BJ (cell line): ENCODE measurements at regions of chr2 and their contacts with region 1.

Region 1: GRCh38 chr2:176140513-176141317 is 10.6 kb upstream of the HOXD4 start:
- DNase-seq: no peak
- H3K4me3 ChIP-seq: peak overlapping the region; percentile 53
- H3K27me3 ChIP-seq: peaks cover 40% of the 10 kb centered on the region
- CTCF ChIP-seq: peak; percentile 92

Region 2: DNA sequence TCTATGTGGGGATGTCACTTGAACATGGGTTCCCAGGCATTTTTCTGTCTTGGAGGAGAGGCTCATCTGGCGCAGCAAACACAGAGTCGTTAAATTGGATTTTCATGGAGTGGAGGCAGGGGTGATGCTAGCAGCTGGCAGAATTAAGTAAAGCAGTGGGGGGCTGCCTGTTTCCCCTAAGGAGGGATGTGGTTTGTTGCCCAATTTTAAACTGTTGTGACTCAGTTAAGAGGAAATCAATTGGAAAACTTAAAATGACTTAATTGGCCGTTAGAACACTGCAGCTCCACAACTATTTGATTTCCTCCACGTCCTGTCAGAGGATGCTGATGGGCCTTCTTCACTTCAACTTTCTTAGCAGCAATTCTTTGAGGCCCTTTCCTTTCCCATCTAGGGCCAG is 605.1 kb before region 1 on chr2:
- CTCF ChIA-PET with region 1: no interaction called
- POLR2A ChIA-PET with region 1: no interaction called
- DNase-seq: no peak
- H3K4me3 ChIP-seq: no peak overlapping the region
- H3K27me3 ChIP-seq: no peaks in the 10 kb centered on the region
- CTCF ChIP-seq: no peak

Region 3: DNA sequence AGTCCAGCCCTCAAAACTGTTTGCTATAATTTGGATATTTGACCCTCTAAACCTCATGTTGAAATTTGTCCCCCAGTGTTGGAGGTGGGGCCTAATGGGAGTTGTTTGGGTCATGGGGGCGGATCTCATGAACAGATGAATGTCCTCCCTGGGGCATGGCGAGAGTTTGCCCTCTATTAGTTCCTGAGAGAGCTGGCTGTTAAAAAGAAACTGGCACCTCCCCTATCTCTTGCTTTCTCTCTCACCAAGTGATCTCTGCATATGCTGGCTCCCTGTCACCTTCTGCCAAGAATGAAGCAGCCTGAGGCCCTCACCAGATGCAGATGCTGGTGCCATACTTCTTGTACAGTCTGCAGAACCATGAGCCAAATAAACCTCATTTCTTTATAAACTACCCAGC is 150.6 kb before region 1 on chr2:
- CTCF ChIA-PET with region 1: no interaction called
- POLR2A ChIA-PET with region 1: no interaction called
- DNase-seq: no peak
- H3K4me3 ChIP-seq: no peak overlapping the region
- H3K27me3 ChIP-seq: no peaks in the 10 kb centered on the region
- CTCF ChIP-seq: no peak

Region 4: DNA sequence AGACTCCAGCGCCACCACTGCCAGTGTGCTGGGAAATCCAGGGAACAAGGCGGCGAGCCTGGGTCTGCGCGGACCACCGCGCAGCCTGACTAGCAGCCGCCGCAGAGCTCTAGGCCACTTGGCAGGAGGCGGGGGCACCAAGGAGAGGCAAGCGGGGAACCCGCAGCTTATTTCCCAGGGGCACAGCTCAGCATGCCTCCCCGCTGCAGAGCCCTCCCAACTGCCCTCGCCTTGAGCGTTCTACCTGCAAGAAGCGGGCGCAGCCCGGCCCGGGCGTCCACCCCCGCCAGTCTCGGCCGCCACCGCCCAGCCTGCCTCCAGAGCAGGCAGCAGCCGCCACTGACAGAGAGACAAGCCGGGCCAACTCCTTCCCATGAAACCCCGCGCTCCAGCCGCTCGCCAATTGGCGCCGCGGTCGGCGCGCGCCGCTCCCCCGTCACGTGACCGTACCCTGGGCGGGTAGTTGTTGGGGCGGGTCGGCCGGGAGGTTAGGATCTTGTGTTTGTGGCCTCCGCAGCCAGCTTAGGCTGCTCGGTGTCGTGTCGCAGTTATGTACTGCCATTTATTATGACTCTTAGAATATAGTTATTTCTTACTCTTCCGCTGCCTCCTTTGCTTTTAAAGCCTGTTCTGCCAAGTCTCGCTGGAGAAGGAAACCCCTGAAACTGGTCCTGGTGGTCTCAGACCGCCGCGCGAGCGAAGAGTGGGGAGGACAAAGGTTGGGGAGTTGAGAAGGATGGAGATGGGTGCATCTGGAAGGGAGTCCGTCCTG is 138.6 kb before region 1 on chr2 and contains the start of gene LNPK:
- CTCF ChIA-PET with region 1: no interaction called
- POLR2A ChIA-PET with region 1: no interaction called
- DNase-seq: peak; percentile 41
- H3K4me3 ChIP-seq: peak within 1 kb of the TSS; percentile 49
- H3K27me3 ChIP-seq: no peaks in the 10 kb centered on the region
- CTCF ChIP-seq: 0 out of 2 replicates have a peak, but pooled peaks have one; percentile 7
- polyA plus RNA-seq, gene LNPK: 19.6 and 36.5 TPM in 2 replicates

Region 5: GRCh38 chr2:176115883-176116813 is 24.6 kb before region 1 on chr2 and contains the start of gene HOXD10:
- CTCF ChIA-PET with region 1: no interaction called
- POLR2A ChIA-PET with region 1: no interaction called
- DNase-seq: no peak
- H3K4me3 ChIP-seq: no peak within 1 kb of the TSS
- H3K27me3 ChIP-seq: 0 out of 2 replicates have a peak, but pooled peaks cover 1% of the 10 kb centered on the region
- CTCF ChIP-seq: no peak
- polyA plus RNA-seq, gene HOXD10: 11.0 and 12.6 TPM in 2 replicates

Region 6: GRCh38 chr2:176126929-176127773 is 13.6 kb before region 1 on chr2:
- CTCF ChIA-PET with region 1: interaction called, 24 read pairs
- POLR2A ChIA-PET with region 1: interaction called, 3 read pairs
- DNase-seq: no peak
- H3K4me3 ChIP-seq: no peak overlapping the region
- H3K27me3 ChIP-seq: peaks cover 25% of the 10 kb centered on the region
- CTCF ChIP-seq: peak; percentile 69

Region 7: GRCh38 chr2:176161819-176162626 is 21.3 kb after region 1 on chr2:
- CTCF ChIA-PET with region 1: interaction called, 12 read pairs
- POLR2A ChIA-PET with region 1: no interaction called
- DNase-seq: no peak
- H3K4me3 ChIP-seq: no peak overlapping the region
- H3K27me3 ChIP-seq: peaks cover 73% of the 10 kb centered on the region
- CTCF ChIP-seq: no peak

Region 8: GRCh38 chr2:176454893-176455811 is 314.4 kb after region 1 on chr2:
- CTCF ChIA-PET with region 1: interaction called, 110 read pairs
- POLR2A ChIA-PET with region 1: no interaction called
- DNase-seq: no peak
- H3K4me3 ChIP-seq: no peak overlapping the region
- H3K27me3 ChIP-seq: no peaks in the 10 kb centered on the region
- CTCF ChIP-seq: peak; percentile 89

Region 9: GRCh38 chr2:176554101-176555048 is 413.7 kb after region 1 on chr2:
- CTCF ChIA-PET with region 1: interaction called, 92 read pairs
- POLR2A ChIA-PET with region 1: no interaction called
- DNase-seq: no peak
- H3K4me3 ChIP-seq: peak overlapping the region; percentile 17; the same call in 1 of the 2 replicates
- H3K27me3 ChIP-seq: peaks cover 5% of the 10 kb centered on the region
- CTCF ChIP-seq: peak; percentile 71

Region 10: GRCh38 chr2:176638167-176639015 is 497.7 kb after region 1 on chr2:
- CTCF ChIA-PET with region 1: interaction called, 89 read pairs
- POLR2A ChIA-PET with region 1: no interaction called
- DNase-seq: no peak
- H3K4me3 ChIP-seq: peak overlapping the region; percentile 59
- H3K27me3 ChIP-seq: peaks cover 1% of the 10 kb centered on the region
- CTCF ChIP-seq: peak; percentile 70

Region 11: DNA sequence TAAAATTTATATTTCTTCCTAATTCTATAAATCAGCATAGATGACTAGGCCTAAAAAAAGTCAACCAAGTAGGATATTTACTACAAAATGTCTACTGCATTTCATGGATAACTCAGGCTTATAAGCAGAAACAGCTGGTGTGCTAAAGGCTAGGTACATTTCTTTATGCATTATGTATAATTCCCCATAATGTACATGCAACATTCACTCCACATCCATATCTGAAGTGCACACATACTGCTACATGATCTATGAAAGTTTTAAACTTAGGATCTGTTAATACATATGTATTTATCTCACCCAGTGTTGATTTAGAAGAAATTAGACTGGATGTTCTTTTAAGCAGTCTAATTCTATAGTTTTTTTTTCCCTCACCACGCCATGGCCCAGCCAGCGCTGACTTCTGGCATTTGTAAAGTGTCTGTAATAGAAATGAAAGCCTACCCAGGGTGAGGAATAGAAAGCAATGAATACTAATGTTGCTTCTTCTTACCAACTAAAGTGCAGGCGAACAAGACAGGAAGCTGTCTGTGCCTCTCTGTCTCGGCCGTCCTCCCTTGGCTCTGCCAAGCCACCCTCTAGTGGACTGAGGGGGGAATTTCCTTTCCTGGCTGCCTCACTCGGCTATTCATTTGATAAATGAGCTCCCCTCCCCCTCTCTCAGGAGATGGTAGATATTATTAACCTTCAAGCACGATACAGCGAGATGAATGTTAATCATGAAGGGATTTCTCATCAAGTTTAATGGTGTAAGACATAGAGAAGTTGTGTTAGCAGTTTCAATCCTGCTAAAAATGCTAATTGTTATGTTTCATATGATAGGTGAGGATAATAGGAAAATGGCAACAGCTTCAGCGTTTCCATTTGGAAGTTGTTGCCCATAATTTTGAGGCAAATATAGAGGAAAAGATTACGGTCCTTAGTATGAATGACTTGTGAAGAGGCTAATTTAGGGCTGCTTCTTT is 513.0 kb after region 1 on chr2:
- CTCF ChIA-PET with region 1: interaction called, 72 read pairs
- POLR2A ChIA-PET with region 1: no interaction called
- DNase-seq: no peak
- H3K4me3 ChIP-seq: no peak overlapping the region
- H3K27me3 ChIP-seq: no peaks in the 10 kb centered on the region; the same call in 1 of the 2 replicates
- CTCF ChIP-seq: peak; percentile 79